CD8-positive, alpha-beta T cell (primary cell): ENCODE measurements at regions of chr11 and their contacts with region 1.

Region 1: GRCh38 chr11:101860696-101861427 is 53.9 kb upstream of the CEP126 start:
- DNase-seq: peak in 7 of 9 experiments; percentile 5 to 49 (median 20)
- ATAC-seq: peak; percentile 42
- H3K4me3 ChIP-seq: no peak overlapping the region
- H3K4me3 Mint-ChIP-seq: no peak overlapping the region
- H3K27ac ChIP-seq: no peak overlapping the region
- H3K27ac Mint-ChIP-seq: no peak overlapping the region
- H3K4me1 ChIP-seq: no peaks in the 10 kb centered on the region
- H3K4me1 Mint-ChIP-seq: peaks cover 1% of the 10 kb centered on the region
- H3K27me3 ChIP-seq: no peaks in the 10 kb centered on the region
- H3K27me3 Mint-ChIP-seq: peaks cover 9% of the 10 kb centered on the region
- CTCF ChIP-seq: peak; percentile 73

Region 2: GRCh38 chr11:100984668-100985067 is 876.2 kb before region 1 on chr11:
- CTCF ChIA-PET with region 1: no interaction called
- POLR2A ChIA-PET with region 1: no interaction called
- intact Hi-C with region 1: no loop called
- DNase-seq: no peak
- ATAC-seq: no peak
- H3K4me3 ChIP-seq: no peak overlapping the region
- H3K4me3 Mint-ChIP-seq: no peak overlapping the region
- H3K27ac ChIP-seq: no peak overlapping the region
- H3K27ac Mint-ChIP-seq: no peak overlapping the region
- H3K4me1 ChIP-seq: no peaks in the 10 kb centered on the region
- H3K4me1 Mint-ChIP-seq: no peaks in the 10 kb centered on the region
- H3K27me3 ChIP-seq: no peaks in the 10 kb centered on the region
- H3K27me3 Mint-ChIP-seq: no peaks in the 10 kb centered on the region
- CTCF ChIP-seq: no peak

Region 3: DNA sequence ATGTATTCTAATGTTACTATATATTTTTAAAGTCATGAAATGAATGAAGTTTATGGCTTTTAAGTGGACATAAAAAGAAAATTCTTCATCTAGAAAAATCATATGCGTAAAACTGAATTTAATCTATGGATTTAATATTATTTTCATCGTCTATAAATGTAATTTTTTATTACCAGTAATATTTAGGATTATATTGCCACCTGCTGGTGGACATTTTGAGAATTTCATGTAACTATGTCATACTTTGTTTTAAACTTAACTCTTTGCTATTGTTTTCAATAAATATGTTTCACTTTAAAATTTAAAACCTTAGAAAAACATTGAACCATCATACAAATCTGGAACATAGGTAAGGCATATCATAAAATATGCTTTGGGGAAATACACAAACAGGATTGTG is 12.6 kb before region 1 on chr11:
- CTCF ChIA-PET with region 1: interaction called, 13 read pairs
- POLR2A ChIA-PET with region 1: no interaction called
- intact Hi-C with region 1: no loop called
- DNase-seq: no peak
- ATAC-seq: no peak
- H3K4me3 ChIP-seq: no peak overlapping the region
- H3K4me3 Mint-ChIP-seq: no peak overlapping the region
- H3K27ac ChIP-seq: no peak overlapping the region
- H3K27ac Mint-ChIP-seq: no peak overlapping the region
- H3K4me1 ChIP-seq: no peaks in the 10 kb centered on the region
- H3K4me1 Mint-ChIP-seq: no peaks in the 10 kb centered on the region
- H3K27me3 ChIP-seq: no peaks in the 10 kb centered on the region
- H3K27me3 Mint-ChIP-seq: peaks cover 11% of the 10 kb centered on the region
- CTCF ChIP-seq: no peak

Region 4: GRCh38 chr11:101929294-101929916 is 68.5 kb after region 1 on chr11:
- CTCF ChIA-PET with region 1: no interaction called
- POLR2A ChIA-PET with region 1: no interaction called
- intact Hi-C with region 1: no loop called
- DNase-seq: no peak
- ATAC-seq: no peak
- H3K4me3 ChIP-seq: no peak overlapping the region
- H3K4me3 Mint-ChIP-seq: no peak overlapping the region
- H3K27ac ChIP-seq: no peak overlapping the region
- H3K27ac Mint-ChIP-seq: no peak overlapping the region
- H3K4me1 ChIP-seq: no peaks in the 10 kb centered on the region
- H3K4me1 Mint-ChIP-seq: no peaks in the 10 kb centered on the region
- H3K27me3 ChIP-seq: no peaks in the 10 kb centered on the region
- H3K27me3 Mint-ChIP-seq: no peaks in the 10 kb centered on the region
- CTCF ChIP-seq: no peak

Region 5: GRCh38 chr11:102007567-102008437 is 146.9 kb after region 1 on chr11:
- CTCF ChIA-PET with region 1: interaction called, 101 read pairs
- POLR2A ChIA-PET with region 1: interaction called, 7 read pairs
- intact Hi-C with region 1: loop called (anchors 1 kb)
- DNase-seq: peak in 2 of 9 experiments; percentile 31 to 49
- ATAC-seq: no peak
- H3K4me3 ChIP-seq: no peak overlapping the region
- H3K4me3 Mint-ChIP-seq: no peak overlapping the region
- H3K27ac ChIP-seq: no peak overlapping the region
- H3K27ac Mint-ChIP-seq: no peak overlapping the region
- H3K4me1 ChIP-seq: no peaks in the 10 kb centered on the region
- H3K4me1 Mint-ChIP-seq: no peaks in the 10 kb centered on the region
- H3K27me3 ChIP-seq: peaks cover 0 to 2% of the 10 kb centered on the region in 2 experiments
- H3K27me3 Mint-ChIP-seq: peaks cover 12% of the 10 kb centered on the region
- CTCF ChIP-seq: peak; percentile 65

Region 6: DNA sequence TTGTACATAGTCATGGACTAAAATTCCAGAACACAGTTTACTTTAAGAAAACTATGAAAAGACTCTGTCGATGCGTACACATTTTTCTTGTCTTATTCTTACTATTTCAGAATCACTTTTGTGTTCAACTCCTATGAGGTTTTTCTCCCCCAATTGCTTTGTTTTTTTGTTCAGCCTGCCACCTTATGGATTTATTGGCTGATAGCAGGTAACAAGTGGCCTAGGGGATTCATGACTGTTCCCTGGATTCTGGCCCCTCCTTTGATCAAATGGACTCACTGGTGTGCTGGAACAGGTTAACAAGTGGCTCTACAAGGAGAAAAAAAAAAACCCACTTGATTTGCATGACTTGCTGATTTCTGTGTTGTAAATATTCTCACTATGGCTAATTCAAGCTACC is 753.6 kb after region 1 on chr11:
- CTCF ChIA-PET with region 1: no interaction called
- POLR2A ChIA-PET with region 1: no interaction called
- intact Hi-C with region 1: loop called in 1 of 2 experiments (anchors 2 kb)
- DNase-seq: peak in 1 of 9 experiments; percentile 9
- ATAC-seq: no peak
- H3K4me3 ChIP-seq: no peak overlapping the region
- H3K4me3 Mint-ChIP-seq: no peak overlapping the region
- H3K27ac ChIP-seq: no peak overlapping the region
- H3K27ac Mint-ChIP-seq: no peak overlapping the region
- H3K4me1 ChIP-seq: no peaks in the 10 kb centered on the region
- H3K4me1 Mint-ChIP-seq: peaks cover 3% of the 10 kb centered on the region
- H3K27me3 ChIP-seq: no peaks in the 10 kb centered on the region
- H3K27me3 Mint-ChIP-seq: no peaks in the 10 kb centered on the region
- CTCF ChIP-seq: no peak